ENCODE measurements at regions of chr5 and their contacts with region 1.

Region 1: GRCh38 chr5:42767491-42768105 is 11.0 kb downstream of the CCDC152 start:
- DNase-seq: peak; percentile 41
- ATAC-seq: no peak
- H3K4me3 ChIP-seq: no peak overlapping the region
- H3K4me3 Mint-ChIP-seq: no peak overlapping the region
- H3K27ac ChIP-seq: no peak overlapping the region
- H3K27ac Mint-ChIP-seq: no peak overlapping the region
- H3K4me1 ChIP-seq: no peaks in the 10 kb centered on the region
- H3K4me1 Mint-ChIP-seq: no peaks in the 10 kb centered on the region
- H3K27me3 ChIP-seq: no peaks in the 10 kb centered on the region
- H3K27me3 Mint-ChIP-seq: peaks cover 15% of the 10 kb centered on the region
- CTCF ChIP-seq: peak; percentile 69

Region 2: DNA sequence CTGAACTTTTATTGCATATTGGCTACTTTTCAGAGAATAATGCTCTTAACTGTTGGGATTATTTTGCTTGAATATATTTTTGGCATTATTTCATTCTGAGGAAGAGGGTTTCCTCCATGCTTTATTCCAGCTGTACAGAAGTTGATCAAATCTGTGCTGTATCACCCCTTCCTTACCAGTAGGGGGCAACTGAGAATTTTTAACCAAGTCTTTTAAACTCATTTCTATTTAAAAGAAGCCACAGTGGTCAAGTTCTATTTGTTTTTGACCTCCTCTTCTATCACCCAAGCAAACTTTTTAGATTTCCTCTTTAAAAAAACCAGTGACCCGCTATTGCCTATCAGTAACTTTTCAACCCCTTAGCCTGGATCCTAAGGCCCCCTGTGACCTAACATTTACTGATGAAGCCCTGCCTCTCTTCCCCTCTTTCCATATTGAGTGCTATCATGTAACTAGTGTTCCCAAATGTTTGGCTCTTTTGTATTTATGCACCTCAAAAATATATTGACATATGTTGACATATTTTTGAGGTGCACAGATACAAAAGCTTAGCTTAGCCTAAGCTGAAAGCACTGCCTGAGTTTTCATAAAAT is 761.9 kb before region 1 on chr5:
- CTCF ChIA-PET with region 1: interaction called, 11 read pairs
- POLR2A ChIA-PET with region 1: no interaction called
- intact Hi-C with region 1: no loop called
- DNase-seq: peak; percentile 22
- ATAC-seq: no peak
- H3K4me3 ChIP-seq: no peak overlapping the region
- H3K4me3 Mint-ChIP-seq: no peak overlapping the region
- H3K27ac ChIP-seq: no peak overlapping the region
- H3K27ac Mint-ChIP-seq: no peak overlapping the region
- H3K4me1 ChIP-seq: no peaks in the 10 kb centered on the region
- H3K4me1 Mint-ChIP-seq: no peaks in the 10 kb centered on the region
- H3K27me3 ChIP-seq: no peaks in the 10 kb centered on the region
- H3K27me3 Mint-ChIP-seq: peaks cover 3% of the 10 kb centered on the region
- CTCF ChIP-seq: peak; percentile 90

Measured in B cell (primary cell).